RWPE1 (cell line): ENCODE measurements at regions of chr19 and their contacts with region 1.

Region 1: DNA sequence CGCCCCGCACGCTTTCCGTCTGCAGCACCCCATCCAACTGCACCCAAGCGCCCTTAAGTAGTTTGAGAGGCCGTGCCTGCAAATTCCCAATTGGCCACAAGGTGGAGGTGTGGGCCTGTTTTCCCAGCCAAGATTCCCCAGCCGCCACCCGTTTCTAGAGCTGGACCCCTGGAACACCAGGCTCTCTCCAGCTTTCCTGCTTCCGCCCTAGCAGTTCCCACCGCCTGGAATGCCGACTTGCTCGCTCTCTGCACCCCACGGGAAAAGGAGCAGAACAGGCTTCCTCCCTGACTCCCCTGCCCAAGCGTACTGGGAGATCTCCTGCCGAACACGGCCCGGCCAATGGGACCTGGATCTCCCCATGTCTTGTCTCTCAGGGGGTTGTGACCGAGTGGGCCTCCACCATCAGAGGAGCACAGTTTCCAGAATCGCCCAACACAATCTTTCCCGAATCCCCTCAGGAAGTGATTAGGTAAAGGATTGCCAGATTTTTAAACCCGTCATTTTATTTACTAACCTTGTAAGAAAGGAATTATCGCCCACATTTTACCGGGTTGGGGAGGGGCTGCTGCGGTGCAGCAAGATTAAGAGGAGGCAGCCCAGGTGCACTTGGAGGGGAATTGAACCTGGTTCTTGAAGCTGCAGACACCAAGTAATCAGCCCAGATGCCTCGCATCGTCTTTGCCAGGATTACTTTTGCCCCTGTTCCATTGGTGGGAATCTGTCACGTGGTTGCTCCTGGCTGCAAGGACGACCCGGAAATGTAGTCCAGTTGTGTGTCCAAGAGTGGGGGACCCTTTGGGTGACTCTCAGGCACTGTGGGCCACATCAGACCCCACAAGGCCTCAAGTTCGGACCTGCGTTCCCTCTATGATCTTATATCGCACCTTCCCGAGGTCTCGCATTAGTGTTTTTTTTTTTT is 3.5 kb upstream of the NAPSA start:
- DNase-seq: peak; percentile 91
- H3K27ac ChIP-seq: peak overlapping the region; percentile 74
- CTCF ChIP-seq: peak; percentile 85

Region 2: DNA sequence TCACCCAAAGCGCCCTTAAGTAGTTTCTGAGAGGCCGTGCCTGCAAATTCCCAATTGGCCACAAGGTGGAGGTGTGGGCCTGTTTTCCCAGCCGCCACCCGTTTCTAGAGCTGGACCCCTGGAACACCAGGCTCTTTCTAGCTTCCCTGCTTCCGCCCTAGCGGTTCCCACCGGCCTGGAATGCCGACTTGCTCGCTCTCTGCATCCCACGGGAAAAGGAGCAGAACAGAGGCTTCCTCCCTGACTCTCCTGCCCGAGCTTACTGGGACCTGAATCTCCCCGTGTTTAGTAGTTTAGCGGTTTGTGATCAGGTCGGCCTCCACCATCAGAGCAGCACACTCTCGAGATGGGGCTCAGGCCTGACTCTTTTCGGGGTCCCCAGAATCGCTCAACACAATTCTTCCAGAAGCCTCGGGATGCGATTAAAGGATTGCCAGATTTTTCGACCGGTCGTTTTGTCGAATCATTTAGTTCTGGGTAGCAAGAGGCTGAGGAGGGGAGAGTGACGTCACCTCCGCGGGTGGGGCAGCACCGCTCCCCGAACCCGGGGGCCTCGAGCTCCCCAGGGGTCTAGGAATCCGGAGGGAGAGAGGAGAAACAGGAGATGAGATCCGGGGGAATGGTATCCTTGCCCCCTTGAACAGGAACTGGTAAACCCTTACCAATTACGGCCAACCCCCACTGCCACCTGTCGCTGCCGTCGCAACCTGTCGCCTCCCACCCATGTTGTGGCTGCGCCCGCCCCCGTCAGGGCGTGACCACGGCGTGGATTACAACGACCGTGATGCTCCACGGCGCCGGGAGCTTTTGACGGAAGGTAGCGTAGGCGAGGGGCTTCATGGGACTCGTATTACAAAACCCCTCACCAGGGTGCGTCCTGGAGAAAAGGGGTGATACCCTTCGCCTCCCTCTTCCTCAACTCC is 11.5 kb before region 1 on chr19:
- CTCF ChIA-PET with region 1: interaction called, 10 read pairs
- POLR2A ChIA-PET with region 1: no interaction called
- DNase-seq: no peak
- H3K27ac ChIP-seq: peak overlapping the region; percentile 40
- CTCF ChIP-seq: peak; percentile 87

Region 3: GRCh38 chr19:50461066-50461875 is 92.4 kb after region 1 on chr19:
- CTCF ChIA-PET with region 1: interaction called, 10 read pairs
- POLR2A ChIA-PET with region 1: no interaction called
- DNase-seq: peak; percentile 85
- H3K27ac ChIP-seq: no peak overlapping the region
- CTCF ChIP-seq: peak; percentile 82